ENCODE measurements at regions of chr3 and their contacts with region 1.

Region 1: DNA sequence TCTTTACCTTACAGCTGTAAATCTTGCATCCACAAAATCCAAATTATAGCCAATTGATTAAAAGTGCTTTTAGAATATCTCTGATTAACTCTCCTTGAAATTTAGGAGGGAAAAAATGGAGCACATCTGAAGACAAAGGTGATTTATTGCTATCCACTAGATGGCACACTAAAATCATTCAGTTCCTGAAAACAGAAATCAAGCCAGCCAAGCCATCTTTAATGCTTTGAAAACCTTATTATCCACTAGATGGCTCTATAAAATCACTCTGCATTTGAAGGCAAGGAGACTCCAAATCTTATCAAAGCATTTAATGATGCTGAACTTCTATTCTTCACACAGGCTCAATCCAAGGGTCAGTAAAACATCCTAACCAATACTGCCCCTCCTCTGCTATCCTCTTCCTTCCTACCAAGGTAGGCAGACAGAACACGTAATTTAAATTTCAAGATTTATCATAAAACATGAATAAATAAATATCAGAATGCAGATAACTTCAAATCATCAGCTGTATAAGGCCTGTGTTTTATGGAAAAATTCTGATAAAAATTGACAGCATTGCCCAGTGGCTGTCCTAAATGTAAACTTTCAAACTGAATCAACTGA is 48.4 kb downstream of the GOLIM4 start:
- DNase-seq: no peak
- H3K4me3 Mint-ChIP-seq: no peak overlapping the region
- H3K27ac Mint-ChIP-seq: no peak overlapping the region
- H3K4me1 Mint-ChIP-seq: no peaks in the 10 kb centered on the region
- H3K27me3 Mint-ChIP-seq: no peaks in the 10 kb centered on the region

Region 2: DNA sequence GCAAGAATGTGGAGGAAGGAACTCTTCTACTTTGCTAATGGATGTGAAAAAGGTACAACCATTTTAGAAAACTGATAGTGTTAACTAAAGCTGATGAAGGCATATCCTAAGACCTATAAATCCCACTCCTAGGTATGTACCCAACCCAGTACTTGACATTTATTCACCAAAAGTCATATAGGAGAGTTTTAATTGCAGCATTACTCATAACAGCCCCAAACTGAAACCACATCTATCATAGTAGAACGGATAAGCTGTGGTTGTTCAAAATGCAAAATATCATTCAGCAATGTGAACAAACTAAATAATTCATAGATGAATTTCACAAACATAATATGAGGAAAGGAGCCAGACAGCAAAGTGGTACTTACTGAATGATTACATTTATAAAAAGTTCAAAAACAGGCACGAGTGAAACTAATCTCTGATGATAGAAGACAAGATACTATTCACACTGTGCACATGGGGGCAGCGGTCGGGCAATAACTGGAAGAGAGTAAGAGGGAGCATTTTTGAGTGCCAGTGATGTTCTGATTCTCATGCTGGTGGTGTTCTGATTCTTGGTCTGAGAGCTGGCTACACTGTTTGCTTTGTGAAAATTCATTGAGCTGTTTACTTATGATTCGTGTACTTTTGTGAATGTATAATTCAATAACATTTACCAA is 14.2 kb after region 1 on chr3:
- intact Hi-C with region 1: loop called (anchors 1 kb)
- DNase-seq: no peak
- H3K4me3 Mint-ChIP-seq: no peak overlapping the region
- H3K27ac Mint-ChIP-seq: no peak overlapping the region
- H3K4me1 Mint-ChIP-seq: peaks cover 9% of the 10 kb centered on the region
- H3K27me3 Mint-ChIP-seq: peaks cover 6% of the 10 kb centered on the region

Region 3: DNA sequence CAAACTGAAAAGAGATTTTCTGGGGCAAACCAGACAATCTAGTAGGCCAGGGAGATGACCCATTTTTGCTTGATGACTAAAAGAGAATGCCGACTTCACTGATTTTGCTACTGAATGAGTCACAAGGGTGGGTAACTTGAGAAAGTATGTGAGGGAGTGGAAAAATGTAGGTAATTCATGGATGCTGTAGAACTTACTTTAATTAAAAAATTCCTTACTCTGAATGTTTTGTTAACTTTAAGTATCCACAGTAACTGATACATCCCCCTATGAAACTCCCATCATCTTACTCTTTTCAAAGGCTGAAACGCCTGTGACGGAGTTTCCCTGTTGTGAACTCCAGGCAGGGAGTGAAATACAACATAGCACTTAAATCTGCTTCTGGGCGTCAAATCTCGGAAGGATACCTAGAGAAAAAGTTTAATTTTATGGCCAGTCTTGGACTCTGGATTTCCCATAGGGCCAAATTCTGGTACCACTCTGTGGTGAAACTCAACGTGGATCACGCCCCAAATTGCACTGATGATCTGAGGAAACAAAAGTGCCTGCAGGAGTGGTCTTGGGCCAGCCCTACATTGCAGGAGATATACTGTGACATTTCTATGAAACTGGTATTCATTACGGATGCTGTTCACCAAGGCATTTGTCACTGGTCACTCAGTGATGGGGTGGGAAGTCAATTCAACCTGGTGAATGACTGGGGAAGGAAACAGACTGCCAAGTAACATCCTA is 24.5 kb after region 1 on chr3:
- intact Hi-C with region 1: no loop called
- DNase-seq: no peak
- H3K4me3 Mint-ChIP-seq: no peak overlapping the region
- H3K27ac Mint-ChIP-seq: no peak overlapping the region
- H3K4me1 Mint-ChIP-seq: peaks cover 10% of the 10 kb centered on the region
- H3K27me3 Mint-ChIP-seq: peaks cover 2% of the 10 kb centered on the region

Region 4: DNA sequence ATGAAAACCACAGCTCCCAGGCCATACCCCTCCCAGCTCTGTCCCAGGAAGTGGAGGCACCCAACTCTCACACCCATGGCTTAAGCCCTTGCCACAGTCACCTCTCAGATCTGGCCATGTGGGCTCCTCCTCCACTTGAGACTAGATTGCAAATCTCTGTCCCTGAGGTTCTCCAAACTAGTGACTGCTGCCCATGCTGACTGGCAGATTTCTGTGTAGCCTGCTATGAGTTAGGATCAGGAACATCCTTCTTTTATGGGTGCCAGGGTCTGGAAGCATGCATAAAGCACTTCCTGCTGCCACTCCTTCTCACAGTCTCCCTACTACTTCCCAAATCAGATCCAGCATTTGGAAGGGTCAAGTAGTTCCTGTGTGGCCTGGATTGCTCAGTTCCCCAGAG is 108.0 kb after region 1 on chr3:
- intact Hi-C with region 1: no loop called
- DNase-seq: no peak
- H3K4me3 Mint-ChIP-seq: no peak overlapping the region
- H3K27ac Mint-ChIP-seq: no peak overlapping the region
- H3K4me1 Mint-ChIP-seq: no peaks in the 10 kb centered on the region
- H3K27me3 Mint-ChIP-seq: peaks cover 2% of the 10 kb centered on the region

Region 5: GRCh38 chr3:168165390-168166269 is 118.3 kb after region 1 on chr3:
- intact Hi-C with region 1: loop called (anchors 1 kb)
- DNase-seq: peak; percentile 1
- H3K4me3 Mint-ChIP-seq: no peak overlapping the region
- H3K27ac Mint-ChIP-seq: no peak overlapping the region
- H3K4me1 Mint-ChIP-seq: no peaks in the 10 kb centered on the region
- H3K27me3 Mint-ChIP-seq: no peaks in the 10 kb centered on the region

Region 6: GRCh38 chr3:168847291-168847883 is 800.1 kb after region 1 on chr3:
- intact Hi-C with region 1: loop called (anchors 5 kb)
- DNase-seq: no peak
- H3K4me3 Mint-ChIP-seq: no peak overlapping the region
- H3K27ac Mint-ChIP-seq: no peak overlapping the region
- H3K4me1 Mint-ChIP-seq: no peaks in the 10 kb centered on the region
- H3K27me3 Mint-ChIP-seq: no peaks in the 10 kb centered on the region